ENCODE measurements at regions of chr17 and their contacts with region 1.

Region 1: GRCh38 chr17:31533546-31534155 is 142.2 kb downstream of the RAB11FIP4 start:
- DNase-seq: no peak
- ATAC-seq: no peak
- H3K4me3 Mint-ChIP-seq: no peak overlapping the region
- H3K27ac Mint-ChIP-seq: peak overlapping the region; percentile 43
- H3K4me1 Mint-ChIP-seq: peaks cover 54% of the 10 kb centered on the region
- H3K27me3 Mint-ChIP-seq: no peaks in the 10 kb centered on the region
- CTCF ChIP-seq: no peak

Region 2: GRCh38 chr17:31437720-31438420 is 95.8 kb before region 1 on chr17:
- CTCF ChIA-PET with region 1: interaction called, 155 read pairs
- POLR2A ChIA-PET with region 1: interaction called, 3 read pairs
- intact Hi-C with region 1: no loop called
- DNase-seq: no peak
- ATAC-seq: no peak
- H3K4me3 Mint-ChIP-seq: no peak overlapping the region
- H3K27ac Mint-ChIP-seq: no peak overlapping the region
- H3K4me1 Mint-ChIP-seq: peaks cover 2% of the 10 kb centered on the region
- H3K27me3 Mint-ChIP-seq: peaks cover 3% of the 10 kb centered on the region
- CTCF ChIP-seq: no peak

Region 3: GRCh38 chr17:31469959-31470358 is 63.7 kb before region 1 on chr17:
- CTCF ChIA-PET with region 1: no interaction called
- POLR2A ChIA-PET with region 1: no interaction called
- intact Hi-C with region 1: no loop called
- DNase-seq: no peak
- ATAC-seq: no peak
- H3K4me3 Mint-ChIP-seq: no peak overlapping the region
- H3K27ac Mint-ChIP-seq: no peak overlapping the region
- H3K4me1 Mint-ChIP-seq: no peaks in the 10 kb centered on the region
- H3K27me3 Mint-ChIP-seq: peaks cover 3% of the 10 kb centered on the region
- CTCF ChIP-seq: no peak

Region 4: DNA sequence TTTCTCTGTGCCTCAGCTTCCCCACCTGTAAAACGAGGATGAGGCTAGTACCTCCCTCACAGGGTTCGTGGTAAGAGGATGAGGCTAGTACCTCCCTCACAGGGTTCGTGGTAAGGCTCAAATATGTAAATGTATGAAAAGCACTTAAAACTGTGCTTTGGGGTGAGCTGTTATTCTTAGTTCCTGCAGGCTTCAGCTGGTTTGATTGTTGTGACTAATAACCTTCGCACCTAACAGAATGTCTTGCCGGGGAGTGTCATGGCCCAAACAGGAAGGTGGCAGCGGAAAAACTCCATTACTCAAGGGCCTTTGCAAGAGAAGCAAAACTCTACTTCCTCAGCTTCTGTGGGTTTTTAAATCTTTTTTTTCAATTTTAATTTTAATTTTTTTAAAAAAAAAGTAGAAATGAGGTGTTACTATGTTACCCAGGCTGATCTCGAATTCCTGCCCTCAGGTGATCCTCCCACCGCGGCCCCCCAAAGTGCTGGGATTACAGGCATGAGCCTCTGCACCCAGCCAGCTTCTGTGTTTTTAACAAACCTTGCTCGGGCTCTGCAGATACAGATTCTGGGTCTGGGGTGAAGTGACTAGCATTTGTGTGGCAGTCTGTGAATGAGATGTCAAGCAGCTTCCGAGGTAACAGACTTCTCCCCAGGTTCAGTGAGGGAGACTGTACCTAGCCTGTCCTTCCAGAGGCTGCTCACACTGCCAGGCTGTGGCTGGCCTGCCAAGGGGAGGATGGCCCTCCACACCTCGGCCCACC is 39.2 kb before region 1 on chr17:
- CTCF ChIA-PET with region 1: interaction called, 8 read pairs
- POLR2A ChIA-PET with region 1: interaction called, 18 read pairs
- intact Hi-C with region 1: loop called (anchors 1 kb)
- DNase-seq: no peak
- ATAC-seq: peak; percentile 56
- H3K4me3 Mint-ChIP-seq: peak overlapping the region; percentile 77
- H3K27ac Mint-ChIP-seq: peak overlapping the region; percentile 97
- H3K4me1 Mint-ChIP-seq: peaks cover 93% of the 10 kb centered on the region
- H3K27me3 Mint-ChIP-seq: no peaks in the 10 kb centered on the region
- CTCF ChIP-seq: no peak

Region 5: DNA sequence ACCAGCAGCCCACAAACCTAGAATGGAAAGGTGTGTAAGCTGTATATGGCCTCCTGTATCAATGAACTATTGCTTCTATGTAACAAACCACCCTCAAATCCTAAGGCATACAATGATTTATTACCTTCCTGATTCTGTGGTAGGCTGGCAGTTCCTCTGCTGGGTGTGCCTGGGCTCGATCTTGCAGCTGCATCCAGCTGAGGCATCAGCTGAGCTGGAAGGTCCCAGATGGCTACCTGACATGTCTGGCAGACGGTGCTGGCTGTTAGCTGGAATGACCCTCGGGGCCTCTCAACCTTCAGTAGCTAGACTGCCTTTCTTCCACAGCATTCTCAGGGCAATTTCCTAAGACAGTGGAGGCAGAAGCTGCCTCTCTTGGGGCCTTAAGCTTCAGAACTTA is 10.5 kb after region 1 on chr17:
- CTCF ChIA-PET with region 1: no interaction called
- POLR2A ChIA-PET with region 1: interaction called, 192 read pairs
- intact Hi-C with region 1: loop called (anchors 1 kb)
- DNase-seq: no peak
- ATAC-seq: no peak
- H3K4me3 Mint-ChIP-seq: no peak overlapping the region
- H3K27ac Mint-ChIP-seq: no peak overlapping the region
- H3K4me1 Mint-ChIP-seq: peaks cover 46% of the 10 kb centered on the region
- H3K27me3 Mint-ChIP-seq: no peaks in the 10 kb centered on the region
- CTCF ChIP-seq: no peak

Region 6: GRCh38 chr17:31558748-31559644 is 25.3 kb after region 1 on chr17:
- CTCF ChIA-PET with region 1: interaction called, 26 read pairs
- POLR2A ChIA-PET with region 1: interaction called, 192 read pairs
- intact Hi-C with region 1: loop called (anchors 2 kb)
- DNase-seq: peak; percentile 75
- ATAC-seq: peak; percentile 94
- H3K4me3 Mint-ChIP-seq: peak overlapping the region; percentile 73
- H3K27ac Mint-ChIP-seq: peak overlapping the region; percentile 18
- H3K4me1 Mint-ChIP-seq: peaks cover 35% of the 10 kb centered on the region
- H3K27me3 Mint-ChIP-seq: no peaks in the 10 kb centered on the region
- CTCF ChIP-seq: no peak

Region 7: GRCh38 chr17:31842183-31843069 is 308.8 kb after region 1 on chr17:
- CTCF ChIA-PET with region 1: interaction called, 103 read pairs
- POLR2A ChIA-PET with region 1: interaction called, 20 read pairs
- intact Hi-C with region 1: loop called (anchors 1 kb)
- DNase-seq: peak; percentile 48
- ATAC-seq: peak; percentile 98
- H3K4me3 Mint-ChIP-seq: no peak overlapping the region
- H3K27ac Mint-ChIP-seq: no peak overlapping the region
- H3K4me1 Mint-ChIP-seq: no peaks in the 10 kb centered on the region
- H3K27me3 Mint-ChIP-seq: peaks cover 3% of the 10 kb centered on the region
- CTCF ChIP-seq: peak; percentile 51

Region 8: GRCh38 chr17:31900877-31901276 is 367.2 kb after region 1 on chr17:
- CTCF ChIA-PET with region 1: no interaction called
- POLR2A ChIA-PET with region 1: interaction called, 10 read pairs
- intact Hi-C with region 1: loop called (anchors 5 kb)
- DNase-seq: no peak
- ATAC-seq: no peak
- H3K4me3 Mint-ChIP-seq: no peak overlapping the region
- H3K27ac Mint-ChIP-seq: no peak overlapping the region
- H3K4me1 Mint-ChIP-seq: peaks cover 11% of the 10 kb centered on the region
- H3K27me3 Mint-ChIP-seq: no peaks in the 10 kb centered on the region
- CTCF ChIP-seq: no peak

Region 9: DNA sequence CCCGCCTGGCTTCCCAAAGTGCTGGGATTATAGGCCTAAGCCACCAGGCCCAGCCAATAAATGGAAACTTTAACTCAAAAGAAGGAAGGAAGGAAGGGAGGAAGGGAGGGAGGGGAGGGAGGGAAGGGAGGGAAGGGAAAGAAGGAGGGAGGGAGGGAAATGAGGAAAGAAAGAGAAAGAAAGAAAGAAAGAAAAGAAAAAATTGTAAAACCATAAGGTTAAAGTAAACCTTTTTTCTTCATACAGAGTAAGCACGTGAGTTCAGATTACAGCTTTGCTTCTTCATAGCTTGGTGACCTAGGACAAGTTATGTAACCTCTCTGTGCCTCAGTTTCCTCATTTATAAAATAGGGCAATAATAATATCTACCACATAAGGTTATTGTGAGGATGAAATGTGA is 499.6 kb after region 1 on chr17:
- CTCF ChIA-PET with region 1: no interaction called
- POLR2A ChIA-PET with region 1: no interaction called
- intact Hi-C with region 1: no loop called
- DNase-seq: no peak
- ATAC-seq: no peak
- H3K4me3 Mint-ChIP-seq: no peak overlapping the region
- H3K27ac Mint-ChIP-seq: no peak overlapping the region
- H3K4me1 Mint-ChIP-seq: no peaks in the 10 kb centered on the region
- H3K27me3 Mint-ChIP-seq: no peaks in the 10 kb centered on the region
- CTCF ChIP-seq: no peak